MCF 10A (cell line): ENCODE measurements at regions of chr5 and their contacts with region 1.

Region 1: DNA sequence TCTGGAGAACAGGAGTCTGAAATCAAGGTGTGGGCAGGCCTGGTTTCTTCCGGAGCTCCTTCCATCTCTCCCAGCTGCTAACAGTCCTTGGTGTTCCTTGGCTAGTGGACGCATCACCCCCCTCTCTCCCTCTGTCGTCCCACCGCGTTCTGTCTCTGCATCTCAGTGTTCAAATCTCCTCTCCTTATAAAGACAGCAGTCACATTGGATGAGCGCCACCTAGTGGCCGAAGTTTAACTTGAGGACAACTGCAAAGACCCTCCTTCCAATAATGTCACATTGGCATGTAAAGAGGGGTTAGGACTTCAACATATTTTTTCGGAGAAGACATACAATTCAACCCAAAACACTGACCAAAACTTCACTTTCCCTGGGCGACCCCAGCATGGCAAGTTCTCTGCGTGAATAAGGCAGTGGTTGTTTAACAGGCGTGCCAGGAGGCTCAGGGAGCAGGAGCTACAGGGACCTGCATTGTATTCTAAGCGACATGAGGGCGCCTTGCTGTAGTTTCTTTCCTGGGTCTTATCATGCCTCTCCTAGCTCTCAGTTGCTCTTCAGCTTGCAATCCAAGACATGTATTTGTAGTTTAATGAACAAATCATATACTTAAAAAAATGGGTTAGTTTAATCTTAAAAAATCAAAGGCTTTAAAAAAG is 27.9 kb upstream of the BASP1 start:
- DNase-seq: peak; percentile 83
- H3K4me3 Mint-ChIP-seq: no peak overlapping the region
- H3K27ac Mint-ChIP-seq: no peak overlapping the region
- H3K4me1 Mint-ChIP-seq: peaks cover 29% of the 10 kb centered on the region
- H3K27me3 Mint-ChIP-seq: no peaks in the 10 kb centered on the region
- CTCF ChIP-seq: peak; percentile 87

Region 2: DNA sequence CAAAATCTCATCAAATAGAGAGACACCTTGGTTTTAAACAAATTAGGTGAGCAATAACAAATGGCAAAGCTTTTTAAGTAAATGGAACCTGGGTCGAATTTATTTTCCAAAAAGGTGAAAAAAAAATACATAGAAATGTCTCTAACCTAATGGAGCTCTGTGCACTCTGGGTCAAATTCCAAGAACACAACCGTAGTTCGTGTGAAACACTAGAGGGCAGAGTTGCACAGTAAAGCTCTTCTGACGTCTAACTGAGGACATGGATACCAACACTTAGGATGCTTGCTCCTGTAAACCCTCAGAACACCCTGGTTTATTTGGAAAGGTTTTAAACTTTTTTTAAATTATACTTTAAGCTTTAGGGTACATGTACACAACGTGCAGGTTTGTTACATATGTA is 1028.8 kb before region 1 on chr5:
- CTCF ChIA-PET with region 1: interaction called, 10 read pairs
- POLR2A ChIA-PET with region 1: no interaction called
- intact Hi-C with region 1: no loop called
- DNase-seq: peak; percentile 68
- H3K4me3 Mint-ChIP-seq: no peak overlapping the region
- H3K27ac Mint-ChIP-seq: no peak overlapping the region
- H3K4me1 Mint-ChIP-seq: no peaks in the 10 kb centered on the region
- H3K27me3 Mint-ChIP-seq: peaks cover 53% of the 10 kb centered on the region
- CTCF ChIP-seq: peak; percentile 62

Region 3: DNA sequence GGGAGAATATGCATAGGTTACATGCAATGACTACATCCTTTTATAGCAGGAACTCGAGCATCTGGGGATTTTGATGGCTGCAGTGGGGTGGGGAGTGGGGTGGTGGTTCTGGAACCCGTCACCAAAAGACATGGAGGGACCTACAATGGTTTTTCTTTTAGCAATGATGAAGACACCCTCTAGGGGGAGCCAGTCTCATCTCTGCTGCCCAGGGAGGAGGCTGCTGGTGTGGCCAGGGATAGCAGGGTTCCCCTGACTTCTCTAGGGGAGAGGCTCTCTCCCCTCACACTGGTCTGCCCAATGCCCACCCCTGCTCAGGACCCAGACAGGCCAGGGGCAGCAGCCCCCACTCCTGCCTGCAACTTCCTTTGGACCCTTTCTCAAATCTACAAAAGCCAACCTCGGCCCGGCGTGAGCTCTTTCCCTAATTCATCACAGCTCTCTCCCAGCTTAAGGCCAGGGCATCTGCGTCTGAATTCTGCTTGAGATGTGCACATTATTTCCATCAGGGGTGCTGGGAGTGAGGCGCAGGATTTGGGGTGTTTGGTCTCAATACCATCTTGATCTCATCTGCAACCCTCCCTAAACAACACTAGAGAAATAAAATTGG is 499.2 kb before region 1 on chr5:
- CTCF ChIA-PET with region 1: interaction called, 24 read pairs
- POLR2A ChIA-PET with region 1: no interaction called
- intact Hi-C with region 1: loop called (anchors 1 kb)
- DNase-seq: peak; percentile 59
- H3K4me3 Mint-ChIP-seq: no peak overlapping the region
- H3K27ac Mint-ChIP-seq: no peak overlapping the region
- H3K4me1 Mint-ChIP-seq: no peaks in the 10 kb centered on the region
- H3K27me3 Mint-ChIP-seq: no peaks in the 10 kb centered on the region
- CTCF ChIP-seq: peak; percentile 48

Region 4: DNA sequence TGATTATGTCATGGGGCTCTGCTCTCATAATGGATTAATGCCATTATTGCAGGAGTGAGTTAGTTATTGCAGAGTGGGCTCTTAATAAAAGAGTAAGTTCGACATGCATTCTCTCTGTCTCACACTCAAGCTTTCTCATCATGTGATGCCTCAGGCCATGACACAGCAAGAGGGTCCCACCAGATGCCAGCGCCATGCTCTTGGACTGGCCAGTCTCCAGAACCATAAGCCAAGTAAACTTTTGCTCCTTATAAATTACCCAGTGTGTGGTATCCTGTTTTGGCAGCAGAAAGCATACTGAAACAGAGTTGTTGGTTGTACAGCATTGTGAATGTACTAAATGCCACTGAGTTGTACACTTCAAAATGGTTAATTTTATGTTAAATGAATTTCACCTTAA is 391.6 kb before region 1 on chr5:
- CTCF ChIA-PET with region 1: interaction called, 120 read pairs
- POLR2A ChIA-PET with region 1: interaction called, 4 read pairs
- intact Hi-C with region 1: no loop called
- DNase-seq: no peak
- H3K4me3 Mint-ChIP-seq: no peak overlapping the region
- H3K27ac Mint-ChIP-seq: peak overlapping the region; percentile 7
- H3K4me1 Mint-ChIP-seq: peaks cover 6% of the 10 kb centered on the region
- H3K27me3 Mint-ChIP-seq: no peaks in the 10 kb centered on the region
- CTCF ChIP-seq: no peak

Region 5: DNA sequence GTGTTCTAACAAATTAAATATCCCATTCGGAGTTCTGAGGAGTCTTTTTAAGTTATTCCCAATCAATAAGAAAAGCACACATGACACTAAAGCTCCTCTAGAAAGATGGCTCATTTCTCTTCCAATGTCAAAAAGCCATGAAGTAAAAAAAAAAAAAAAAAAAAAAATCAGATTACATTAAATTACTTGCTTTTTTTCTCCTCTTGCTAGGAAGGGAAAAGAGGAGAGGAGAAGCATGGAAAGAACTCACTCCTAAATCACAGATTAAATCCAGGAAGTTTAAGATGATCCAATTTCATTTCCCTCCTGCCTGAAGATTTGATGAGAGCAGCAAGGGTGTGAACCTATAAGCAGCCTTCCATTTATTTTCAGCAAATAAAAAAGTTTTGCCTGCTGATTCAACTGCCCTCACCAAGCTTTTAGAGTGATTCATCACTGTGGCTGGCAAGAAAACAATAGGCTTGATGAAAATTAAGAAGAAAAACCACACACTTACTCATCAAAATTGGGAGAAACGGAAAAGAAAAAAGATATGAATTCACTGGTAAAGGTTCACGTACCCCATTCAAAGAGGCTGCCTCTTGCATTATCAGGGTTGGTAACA is 273.1 kb before region 1 on chr5:
- CTCF ChIA-PET with region 1: interaction called, 28 read pairs
- POLR2A ChIA-PET with region 1: interaction called, 5 read pairs
- intact Hi-C with region 1: no loop called
- DNase-seq: peak; percentile 93
- H3K4me3 Mint-ChIP-seq: peak overlapping the region; percentile 54
- H3K27ac Mint-ChIP-seq: peak overlapping the region; percentile 81
- H3K4me1 Mint-ChIP-seq: peaks cover 43% of the 10 kb centered on the region
- H3K27me3 Mint-ChIP-seq: no peaks in the 10 kb centered on the region
- CTCF ChIP-seq: no peak

Region 6: GRCh38 chr5:17113163-17113958 is 76.1 kb before region 1 on chr5:
- CTCF ChIA-PET with region 1: interaction called, 10 read pairs
- POLR2A ChIA-PET with region 1: no interaction called
- intact Hi-C with region 1: no loop called
- DNase-seq: no peak
- H3K4me3 Mint-ChIP-seq: no peak overlapping the region
- H3K27ac Mint-ChIP-seq: no peak overlapping the region
- H3K4me1 Mint-ChIP-seq: peaks cover under 1% of the 10 kb centered on the region
- H3K27me3 Mint-ChIP-seq: no peaks in the 10 kb centered on the region
- CTCF ChIP-seq: no peak

Region 7: DNA sequence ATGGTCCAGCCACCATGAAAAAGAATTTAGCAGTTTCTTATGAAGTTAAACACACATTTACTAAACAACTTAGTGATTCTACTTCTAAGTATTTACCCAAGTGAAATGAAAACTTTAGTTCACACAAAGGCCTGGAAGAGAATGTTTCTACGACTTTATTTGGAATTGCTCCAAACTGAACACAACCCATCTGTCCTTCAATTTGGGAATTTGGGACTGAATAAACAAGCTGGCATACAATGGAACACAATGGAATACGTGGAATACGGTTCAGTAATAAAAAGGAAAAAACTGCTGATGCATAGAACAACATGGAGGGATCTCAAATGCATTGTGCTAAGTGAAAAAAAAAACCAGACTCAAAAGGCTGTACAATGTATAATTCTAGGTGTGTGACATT is 16.7 kb before region 1 on chr5:
- CTCF ChIA-PET with region 1: interaction called, 12 read pairs
- POLR2A ChIA-PET with region 1: no interaction called
- intact Hi-C with region 1: no loop called
- DNase-seq: no peak
- H3K4me3 Mint-ChIP-seq: no peak overlapping the region
- H3K27ac Mint-ChIP-seq: no peak overlapping the region
- H3K4me1 Mint-ChIP-seq: no peaks in the 10 kb centered on the region
- H3K27me3 Mint-ChIP-seq: no peaks in the 10 kb centered on the region
- CTCF ChIP-seq: no peak

Region 8: DNA sequence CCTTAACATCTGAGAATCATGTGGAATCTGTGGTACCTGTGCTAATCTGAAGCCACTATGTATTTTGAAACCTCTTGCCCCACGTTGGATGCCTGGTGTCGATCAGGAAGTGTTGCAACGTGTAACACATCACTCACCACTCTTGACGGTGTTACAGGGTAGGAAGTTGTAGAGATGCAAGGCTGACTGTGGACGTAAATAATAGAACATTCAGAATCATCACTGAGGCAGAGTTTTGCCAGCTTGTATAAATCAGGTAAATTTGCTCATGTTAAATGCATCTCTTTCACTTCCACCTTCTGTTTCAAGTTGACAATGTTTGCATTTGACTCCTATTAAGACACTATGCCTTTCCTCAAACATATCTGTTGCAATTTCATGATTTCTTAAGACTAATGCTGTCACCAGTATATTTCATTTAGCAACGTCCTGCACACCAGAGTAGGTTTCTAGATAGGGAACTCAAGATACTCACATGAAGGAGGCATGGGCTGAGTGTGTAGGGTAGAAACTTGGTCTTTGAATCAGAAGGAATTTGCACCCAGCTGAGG is 66.0 kb after region 1 on chr5:
- CTCF ChIA-PET with region 1: no interaction called
- POLR2A ChIA-PET with region 1: no interaction called
- intact Hi-C with region 1: no loop called
- DNase-seq: peak; percentile 91
- H3K4me3 Mint-ChIP-seq: peak overlapping the region; percentile 41
- H3K27ac Mint-ChIP-seq: peak overlapping the region; percentile 79
- H3K4me1 Mint-ChIP-seq: peaks cover 50% of the 10 kb centered on the region
- H3K27me3 Mint-ChIP-seq: no peaks in the 10 kb centered on the region
- CTCF ChIP-seq: no peak

Region 9: DNA sequence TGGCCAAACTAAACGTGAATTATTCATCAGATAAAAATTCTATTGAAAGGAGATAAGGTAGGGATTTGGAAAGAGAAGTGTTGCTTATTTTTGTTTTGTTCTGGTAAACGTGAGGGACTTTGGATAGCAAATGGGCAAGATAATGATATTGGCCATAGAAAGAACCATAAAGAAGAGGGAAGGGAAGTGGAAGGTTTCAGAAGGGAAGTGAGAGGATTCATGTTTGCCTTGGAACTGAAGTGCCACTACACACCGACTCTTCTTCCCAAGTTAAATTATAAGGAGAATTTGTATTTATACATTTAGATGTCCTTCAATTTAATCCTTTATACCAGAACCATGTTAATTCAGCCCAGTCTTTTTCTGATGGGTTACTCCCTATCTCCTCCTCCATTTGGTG is 266.4 kb after region 1 on chr5:
- CTCF ChIA-PET with region 1: no interaction called
- POLR2A ChIA-PET with region 1: no interaction called
- intact Hi-C with region 1: no loop called
- DNase-seq: no peak
- H3K4me3 Mint-ChIP-seq: no peak overlapping the region
- H3K27ac Mint-ChIP-seq: no peak overlapping the region
- H3K4me1 Mint-ChIP-seq: no peaks in the 10 kb centered on the region
- H3K27me3 Mint-ChIP-seq: no peaks in the 10 kb centered on the region
- CTCF ChIP-seq: no peak